Activated CD4-positive, alpha-beta T cell treated with anti-CD3 and anti-CD28 coated beads, Interleukin-2, amount 10 ng/mL, durations not matched to agents 7 days and 5 days (primary cell): ENCODE measurements at regions of chr11 and their contacts with region 1.

Region 1: GRCh38 chr11:117143871-117144476 is at the start of gene PAFAH1B2:
- DNase-seq: peak; percentile 97
- H3K4me3 Mint-ChIP-seq: peak within 1 kb of the TSS; percentile 98
- H3K27ac Mint-ChIP-seq: peak within 1 kb of the TSS; percentile 94
- H3K4me1 Mint-ChIP-seq: peaks cover 45% of the 10 kb centered on the region
- H3K27me3 Mint-ChIP-seq: peaks cover 23% of the 10 kb centered on the region
- total RNA-seq, gene PAFAH1B2: 48.4 to 52.1 TPM

Region 2: DNA sequence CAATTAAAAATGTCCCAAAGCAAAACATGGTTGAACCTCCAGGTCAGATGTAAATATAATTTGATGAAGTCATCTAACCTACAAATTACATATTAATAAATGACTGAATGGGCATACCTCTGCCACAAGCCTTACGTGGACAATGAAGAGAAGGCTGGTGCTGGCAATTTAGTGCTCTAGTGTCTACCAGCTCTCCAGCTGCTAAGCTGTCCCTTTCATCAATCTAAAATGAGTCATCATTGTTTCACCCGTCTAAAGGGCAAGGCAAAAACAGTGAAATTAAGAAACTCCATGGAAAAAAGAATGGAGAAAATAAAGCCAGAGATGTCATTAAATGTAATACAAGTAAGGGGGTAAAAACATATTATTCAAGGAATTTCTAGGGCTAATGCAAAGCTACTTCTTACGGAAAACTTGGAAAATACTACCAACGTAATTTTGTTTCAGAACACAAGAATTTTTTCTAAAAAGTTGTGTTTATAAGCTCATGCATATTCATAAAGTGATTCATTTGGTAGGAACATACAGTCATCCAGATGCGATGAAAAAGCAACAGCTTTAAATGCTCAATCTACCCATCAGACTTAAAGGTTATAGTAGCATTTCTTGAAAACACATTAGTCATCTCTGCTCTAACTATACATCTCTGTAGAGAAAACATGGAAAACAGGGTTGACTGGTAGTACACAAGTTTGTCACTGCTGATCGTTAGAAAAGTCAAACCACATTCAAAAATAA is 117.2 kb before region 1 on chr11:
- CTCF ChIA-PET with region 1: no interaction called
- POLR2A ChIA-PET with region 1: no interaction called
- DNase-seq: no peak
- H3K4me3 Mint-ChIP-seq: no peak overlapping the region
- H3K27ac Mint-ChIP-seq: no peak overlapping the region
- H3K4me1 Mint-ChIP-seq: peaks cover 40% of the 10 kb centered on the region
- H3K27me3 Mint-ChIP-seq: no peaks in the 10 kb centered on the region

Region 3: GRCh38 chr11:117171404-117172061 is 27.6 kb after region 1 on chr11:
- CTCF ChIA-PET with region 1: interaction called, 13 read pairs
- POLR2A ChIA-PET with region 1: no interaction called
- DNase-seq: no peak
- H3K4me3 Mint-ChIP-seq: no peak overlapping the region
- H3K27ac Mint-ChIP-seq: no peak overlapping the region
- H3K4me1 Mint-ChIP-seq: peaks cover 6% of the 10 kb centered on the region
- H3K27me3 Mint-ChIP-seq: no peaks in the 10 kb centered on the region

Region 4: GRCh38 chr11:117226388-117227385 is 82.7 kb after region 1 on chr11:
- CTCF ChIA-PET with region 1: interaction called, 12 read pairs
- POLR2A ChIA-PET with region 1: interaction called, 5 read pairs
- DNase-seq: peak; percentile 62
- H3K4me3 Mint-ChIP-seq: no peak overlapping the region
- H3K27ac Mint-ChIP-seq: peak overlapping the region; percentile 71
- H3K4me1 Mint-ChIP-seq: peaks cover 41% of the 10 kb centered on the region
- H3K27me3 Mint-ChIP-seq: no peaks in the 10 kb centered on the region

Region 5: GRCh38 chr11:117259417-117259816 is 115.4 kb after region 1 on chr11:
- CTCF ChIA-PET with region 1: no interaction called
- POLR2A ChIA-PET with region 1: no interaction called
- DNase-seq: no peak
- H3K4me3 Mint-ChIP-seq: no peak overlapping the region
- H3K27ac Mint-ChIP-seq: no peak overlapping the region
- H3K4me1 Mint-ChIP-seq: peaks cover 6% of the 10 kb centered on the region
- H3K27me3 Mint-ChIP-seq: no peaks in the 10 kb centered on the region